PC-3 (cell line): ENCODE measurements at regions of chr17 and their contacts with region 1.

Region 1: DNA sequence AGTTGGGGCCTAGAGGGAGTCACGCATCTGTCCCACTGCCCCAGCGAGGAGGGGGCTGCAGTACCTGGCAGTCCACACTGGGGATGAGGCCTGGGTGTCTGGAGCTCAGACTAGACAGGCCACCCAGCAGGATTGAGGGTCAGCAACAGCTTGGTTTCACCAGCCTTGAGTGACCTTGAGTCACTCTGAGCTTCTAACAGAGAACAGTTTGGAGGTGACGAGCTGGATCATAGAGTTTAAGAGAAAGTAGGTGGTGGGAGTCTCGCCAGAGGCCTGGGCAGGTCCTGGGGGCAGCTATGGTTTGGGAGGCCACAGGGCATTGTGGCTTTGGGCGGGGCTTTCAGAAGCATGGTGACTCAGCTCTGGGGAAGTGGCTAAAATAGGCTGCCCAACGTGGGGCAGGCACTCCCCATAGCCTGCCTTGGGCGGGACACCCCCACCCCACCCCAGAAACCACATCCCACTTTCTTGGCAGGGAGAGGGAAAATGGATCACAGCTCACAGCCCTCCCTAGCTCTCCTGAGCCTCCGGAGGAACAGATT is 20.5 kb downstream of the CDC42EP4 start:
- DNase-seq: peak; percentile 98
- ATAC-seq: peak; percentile 71
- H3K4me3 ChIP-seq: peak overlapping the region; percentile 42
- H3K27ac ChIP-seq: peak overlapping the region; percentile 95
- H3K4me1 ChIP-seq: peaks cover 84% of the 10 kb centered on the region
- H3K27me3 ChIP-seq: no peaks in the 10 kb centered on the region
- CTCF ChIP-seq: no peak

Region 2: GRCh38 chr17:73189417-73190099 is 101.8 kb before region 1 on chr17:
- CTCF ChIA-PET with region 1: no interaction called
- POLR2A ChIA-PET with region 1: no interaction called
- intact Hi-C with region 1: no loop called
- DNase-seq: peak; percentile 78
- ATAC-seq: peak; percentile 39
- H3K4me3 ChIP-seq: no peak overlapping the region
- H3K27ac ChIP-seq: no peak overlapping the region
- H3K4me1 ChIP-seq: peaks cover 9% of the 10 kb centered on the region
- H3K27me3 ChIP-seq: no peaks in the 10 kb centered on the region
- CTCF ChIP-seq: peak; percentile 86

Region 3: GRCh38 chr17:73304971-73305812 is 13.9 kb after region 1 on chr17:
- CTCF ChIA-PET with region 1: interaction called, 13 read pairs
- POLR2A ChIA-PET with region 1: interaction called, 15 read pairs
- intact Hi-C with region 1: loop called (anchors 1 kb)
- DNase-seq: peak; percentile 84
- ATAC-seq: peak; percentile 64
- H3K4me3 ChIP-seq: peak overlapping the region; percentile 55
- H3K27ac ChIP-seq: peak overlapping the region; percentile 82
- H3K4me1 ChIP-seq: peaks cover 67% of the 10 kb centered on the region
- H3K27me3 ChIP-seq: no peaks in the 10 kb centered on the region
- CTCF ChIP-seq: peak; percentile 60

Region 4: DNA sequence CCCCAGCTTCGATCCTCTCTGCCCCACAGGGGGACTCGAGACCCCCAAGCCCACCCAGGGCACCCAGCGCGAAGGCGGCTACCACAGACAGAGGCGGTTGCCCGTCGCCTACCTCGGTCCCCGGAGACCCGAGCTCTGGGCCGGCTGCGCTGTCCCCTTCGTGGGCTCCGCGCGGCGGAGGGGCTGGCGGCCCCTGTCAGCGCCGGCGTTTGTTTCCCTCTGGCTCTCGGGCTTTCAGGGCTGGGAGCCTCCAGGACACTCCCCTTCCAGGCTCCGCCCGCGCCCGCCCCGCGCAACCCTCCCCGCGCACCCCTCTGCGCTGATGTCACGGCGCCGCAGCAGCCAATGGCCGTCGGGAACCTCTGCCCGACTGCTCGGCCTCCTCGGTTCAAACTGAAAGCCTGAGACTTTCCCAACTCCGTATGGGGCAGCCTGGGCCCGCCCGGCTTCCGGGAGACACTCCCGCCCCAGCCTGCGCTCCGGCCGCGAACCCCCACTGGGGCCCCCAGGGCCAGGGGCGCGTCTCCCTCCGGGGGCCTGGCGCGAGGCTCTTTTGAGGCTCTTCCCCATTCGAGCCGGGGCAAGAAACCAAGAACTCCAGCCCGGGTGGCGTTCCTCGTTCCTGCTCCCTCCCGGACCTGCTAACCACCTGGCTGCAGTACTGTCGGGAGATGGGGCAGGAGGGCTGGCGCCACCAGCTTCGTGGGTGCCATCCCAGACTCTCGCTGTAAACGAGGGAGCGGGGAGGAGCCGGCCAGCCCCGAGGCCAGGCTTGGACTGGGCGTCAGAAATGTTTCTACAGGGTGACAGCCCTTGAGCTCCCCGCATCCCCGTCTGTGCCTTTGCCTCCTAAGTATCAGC is 20.7 kb after region 1 on chr17 and contains the start of gene CDC42EP4:
- CTCF ChIA-PET with region 1: interaction called, 13 read pairs
- POLR2A ChIA-PET with region 1: interaction called, 15 read pairs
- intact Hi-C with region 1: loop called (anchors 1 kb)
- DNase-seq: peak; percentile 98
- ATAC-seq: peak; percentile 81
- H3K4me3 ChIP-seq: peak within 1 kb of the TSS; percentile 94
- H3K27ac ChIP-seq: peak within 1 kb of the TSS; percentile 82
- H3K4me1 ChIP-seq: peaks cover 35% of the 10 kb centered on the region
- H3K27me3 ChIP-seq: no peaks in the 10 kb centered on the region
- CTCF ChIP-seq: no peak
- total RNA-seq, gene CDC42EP4: 83.1 and 109 TPM in 2 replicates